ENCODE measurements at regions of chr11 and their contacts with region 1.

Region 1: GRCh38 chr11:64100360-64100759 is 64.6 kb downstream of the FLRT1 start:
- DNase-seq: no peak
- H3K4me3 ChIP-seq: no peak overlapping the region
- H3K27ac ChIP-seq: no peak overlapping the region
- H3K4me1 ChIP-seq: no peaks in the 10 kb centered on the region; a peak in 3 of 7 replicates
- H3K27me3 ChIP-seq: peaks cover 2 to 57% (median 37%) of the 10 kb centered on the region in 4 experiments
- CTCF ChIP-seq: peak; percentile 52 to 83 (median 68)
- EP300 ChIP-seq: no peak
- POLR2A ChIP-seq: no peak
- RAD21 ChIP-seq: peak; percentile 48 to 58

Region 2: GRCh38 chr11:64110465-64111375 is 10.4 kb after region 1 on chr11:
- CTCF ChIA-PET with region 1: interaction called, 17 read pairs
- POLR2A ChIA-PET with region 1: interaction called, 3 read pairs
- DNase-seq: no peak
- H3K4me3 ChIP-seq: no peak overlapping the region
- H3K27ac ChIP-seq: no peak overlapping the region
- H3K4me1 ChIP-seq: peaks cover 0 to 3% (median 0%) of the 10 kb centered on the region in 4 experiments; a peak in 2 of 7 replicates
- H3K27me3 ChIP-seq: peaks cover 0 to 28% (median 22%) of the 10 kb centered on the region in 4 experiments; a peak in 5 of 7 replicates
- CTCF ChIP-seq: no peak
- EP300 ChIP-seq: no peak
- POLR2A ChIP-seq: no peak
- RAD21 ChIP-seq: no peak

Region 3: DNA sequence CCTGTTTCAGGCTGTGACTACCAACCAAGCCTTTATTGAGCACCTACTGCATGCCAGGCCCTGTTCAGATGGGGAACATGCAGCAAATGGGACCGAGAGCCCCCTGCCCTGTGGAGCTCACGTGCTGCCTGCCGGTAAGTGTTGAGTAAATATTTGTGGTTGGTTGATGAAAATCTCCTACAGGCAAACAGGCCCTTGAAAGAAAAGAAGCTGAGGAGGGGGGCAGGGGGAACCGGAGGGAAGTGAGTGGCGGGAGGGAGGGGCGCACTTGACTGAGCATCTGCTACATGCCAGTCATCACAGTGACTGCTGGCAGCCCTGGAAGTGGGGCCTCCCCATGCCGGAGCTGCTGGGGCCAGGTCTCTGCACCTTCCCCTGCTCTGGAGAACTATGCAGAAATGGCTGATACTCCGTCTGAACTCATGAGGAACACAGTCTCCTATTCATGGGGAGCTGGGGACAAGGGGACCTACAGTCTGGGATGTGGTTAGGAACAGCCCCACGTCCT is 31.4 kb after region 1 on chr11:
- CTCF ChIA-PET with region 1: interaction called, 17 read pairs
- POLR2A ChIA-PET with region 1: interaction called, 5 read pairs
- DNase-seq: no peak
- H3K4me3 ChIP-seq: no peak overlapping the region
- H3K27ac ChIP-seq: no peak overlapping the region
- H3K4me1 ChIP-seq: peaks cover 0 to 14% (median 9%) of the 10 kb centered on the region in 4 experiments; a peak in 5 of 7 replicates
- H3K27me3 ChIP-seq: peaks cover 0 to 35% (median 16%) of the 10 kb centered on the region in 4 experiments; a peak in 5 of 7 replicates
- CTCF ChIP-seq: no peak
- EP300 ChIP-seq: no peak
- POLR2A ChIP-seq: no peak
- RAD21 ChIP-seq: no peak

Region 4: DNA sequence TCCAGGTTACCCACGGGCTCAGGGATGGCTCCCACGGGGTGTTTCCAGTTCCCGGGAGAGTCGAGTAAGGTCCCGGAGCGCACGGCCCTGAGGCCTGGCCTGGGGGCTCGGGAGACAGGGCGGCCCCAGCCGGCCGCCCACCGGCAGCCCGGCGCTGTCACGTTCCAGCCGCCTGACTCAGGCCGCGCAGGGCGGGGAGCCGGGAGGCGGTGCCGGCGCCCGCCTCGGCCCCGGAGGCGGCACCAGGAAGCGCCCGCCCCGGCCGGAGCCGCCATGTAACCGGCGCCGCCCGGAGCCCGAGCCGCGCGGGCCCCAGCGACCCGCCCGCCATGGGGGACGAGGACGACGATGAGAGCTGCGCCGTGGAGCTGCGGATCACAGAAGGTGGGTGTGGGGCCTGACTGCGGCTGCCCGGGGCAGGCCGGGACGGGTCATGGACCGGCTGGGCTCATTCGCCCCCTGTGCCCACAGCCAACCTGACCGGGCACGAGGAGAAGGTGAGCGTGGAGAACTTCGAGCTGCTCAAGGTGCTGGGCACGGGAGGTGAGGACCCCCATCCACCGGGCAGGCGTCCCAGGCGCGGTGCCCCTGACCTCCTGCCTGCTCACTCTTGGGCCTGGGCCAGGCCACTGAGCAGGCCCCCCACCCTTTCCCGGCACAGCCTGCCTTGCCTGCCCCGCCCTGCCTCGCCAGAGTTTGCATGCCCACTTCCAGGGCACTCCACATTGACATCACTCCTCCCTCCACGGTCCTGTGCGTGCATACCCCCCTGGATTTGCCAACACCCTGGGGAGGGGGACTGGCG is 258.7 kb after region 1 on chr11 and contains the start of gene RPS6KA4:
- CTCF ChIA-PET with region 1: no interaction called
- POLR2A ChIA-PET with region 1: no interaction called
- DNase-seq: peak in 1 of 2 experiments; percentile 75
- H3K4me3 ChIP-seq: peak within 1 kb of the TSS; percentile 61 to 83 (median 72)
- H3K27ac ChIP-seq: no peak within 1 kb of the TSS; the same call in 1 of the 2 replicates
- H3K4me1 ChIP-seq: peaks cover 0 to 39% (median 30%) of the 10 kb centered on the region in 4 experiments; a peak in 6 of 7 replicates
- H3K27me3 ChIP-seq: no peaks in the 10 kb centered on the region
- CTCF ChIP-seq: no peak
- EP300 ChIP-seq: no peak
- POLR2A ChIP-seq: no peak
- RAD21 ChIP-seq: no peak
- total RNA-seq, gene RPS6KA4: 12.6 and 13.2 TPM in 2 replicates